AG04449 (cell line): ENCODE measurements at regions of chr19 and their contacts with region 1.

Region 1: GRCh38 chr19:12139885-12140547 is at the start of gene ZNF20:
- DNase-seq: peak; percentile 44
- H3K4me3 ChIP-seq: peak within 1 kb of the TSS; percentile 86
- CTCF ChIP-seq: no peak

Region 2: GRCh38 chr19:11964858-11965645 is 175.0 kb before region 1 on chr19 and contains the start of gene ZNF763:
- CTCF ChIA-PET with region 1: interaction called, 22 read pairs
- POLR2A ChIA-PET with region 1: no interaction called
- DNase-seq: no peak
- H3K4me3 ChIP-seq: peak within 1 kb of the TSS; percentile 80
- CTCF ChIP-seq: no peak

Region 3: GRCh38 chr19:12064590-12065538 is 75.2 kb before region 1 on chr19 and contains the start of gene ZNF844:
- CTCF ChIA-PET with region 1: interaction called, 54 read pairs
- POLR2A ChIA-PET with region 1: interaction called, 6 read pairs
- DNase-seq: no peak
- H3K4me3 ChIP-seq: peak within 1 kb of the TSS; percentile 94
- CTCF ChIP-seq: no peak

Region 4: DNA sequence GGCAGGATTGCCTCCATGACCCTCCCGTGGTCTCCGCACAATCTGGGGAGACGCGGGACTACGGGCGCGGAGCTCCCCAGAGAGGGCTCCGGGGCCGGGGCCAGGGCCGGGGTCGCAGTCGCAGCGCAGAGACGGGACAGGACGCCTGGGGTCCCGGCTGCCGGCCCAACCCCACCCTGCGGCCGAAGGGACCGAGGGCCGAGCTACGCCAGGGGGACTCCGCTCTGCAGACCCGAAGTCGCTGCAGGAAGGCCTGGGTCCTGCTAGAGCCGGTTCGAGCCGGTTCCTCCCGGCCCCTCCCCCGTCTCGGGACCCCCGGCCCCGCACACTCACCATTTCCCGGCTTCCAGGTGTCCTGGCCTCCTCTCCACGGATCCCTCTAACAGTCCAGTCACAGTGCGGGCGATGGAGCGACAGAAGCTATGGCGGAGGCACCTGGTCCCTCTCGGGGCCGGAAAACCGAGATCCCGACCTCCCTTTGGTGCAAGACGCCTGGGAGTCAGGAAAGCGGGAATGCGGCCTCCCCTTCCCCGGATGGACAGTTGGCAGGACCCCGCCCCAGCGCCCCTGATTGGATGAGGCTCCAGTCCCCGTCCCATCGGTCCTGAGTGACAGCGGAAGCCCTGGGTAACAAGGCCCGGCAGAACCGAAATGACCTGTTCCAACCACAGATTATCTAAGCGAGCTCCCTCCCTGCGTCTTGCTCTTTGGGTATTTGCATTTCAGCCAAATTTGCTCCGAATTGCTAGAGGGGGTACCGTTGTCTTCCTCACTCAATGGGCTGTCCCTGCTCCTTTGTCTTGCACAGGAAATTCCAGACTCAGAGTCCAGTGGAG is 16.4 kb after region 1 on chr19 and contains the start of gene ZNF625:
- CTCF ChIA-PET with region 1: interaction called, 42 read pairs
- POLR2A ChIA-PET with region 1: interaction called, 10 read pairs
- DNase-seq: peak; percentile 24
- H3K4me3 ChIP-seq: peak within 1 kb of the TSS; percentile 80
- CTCF ChIP-seq: no peak